CD4-positive, alpha-beta T cell (primary cell): ENCODE measurements at regions of chr13 and their contacts with region 1.

Region 1: DNA sequence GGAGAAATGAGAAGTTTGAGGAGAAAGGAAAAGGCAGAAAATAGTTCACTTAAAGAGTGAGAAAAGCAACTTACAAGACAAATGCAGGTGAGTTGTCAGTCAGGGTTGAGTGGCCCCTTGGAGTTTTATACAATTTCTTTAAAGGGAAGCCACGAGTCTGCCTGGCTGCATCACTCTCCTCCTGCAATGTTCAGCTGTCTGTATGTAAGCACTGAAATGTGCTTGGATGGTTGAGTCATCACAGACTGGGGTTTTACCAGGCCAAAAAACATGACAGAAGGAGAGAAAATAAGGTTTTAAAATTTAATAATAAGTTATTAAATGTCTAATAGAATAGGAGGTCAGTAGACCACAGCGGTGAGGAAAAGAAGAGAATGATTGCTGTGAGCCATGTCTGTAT is 51.0 kb upstream of the FGF14 start:
- DNase-seq: no peak
- ATAC-seq: no peak
- H3K4me3 ChIP-seq: no peak overlapping the region
- H3K4me3 Mint-ChIP-seq: no peak overlapping the region
- H3K27ac ChIP-seq: no peak overlapping the region
- H3K27ac Mint-ChIP-seq: no peak overlapping the region
- H3K4me1 ChIP-seq: peaks cover 4% of the 10 kb centered on the region
- H3K4me1 Mint-ChIP-seq: no peaks in the 10 kb centered on the region
- H3K27me3 ChIP-seq: no peaks in the 10 kb centered on the region
- H3K27me3 Mint-ChIP-seq: peaks cover 21% of the 10 kb centered on the region
- CTCF ChIP-seq: no peak

Region 2: GRCh38 chr13:101942038-101942437 is 510.8 kb before region 1 on chr13:
- CTCF ChIA-PET with region 1: no interaction called
- POLR2A ChIA-PET with region 1: no interaction called
- intact Hi-C with region 1: loop called in 1 of 2 experiments (anchors 10 kb)
- DNase-seq: peak in 1 of 14 experiments; percentile 2
- ATAC-seq: no peak
- H3K4me3 ChIP-seq: no peak overlapping the region
- H3K4me3 Mint-ChIP-seq: no peak overlapping the region
- H3K27ac ChIP-seq: no peak overlapping the region
- H3K27ac Mint-ChIP-seq: no peak overlapping the region
- H3K4me1 ChIP-seq: no peaks in the 10 kb centered on the region
- H3K4me1 Mint-ChIP-seq: no peaks in the 10 kb centered on the region
- H3K27me3 ChIP-seq: no peaks in the 10 kb centered on the region
- H3K27me3 Mint-ChIP-seq: peaks cover 3% of the 10 kb centered on the region
- CTCF ChIP-seq: no peak

Region 3: GRCh38 chr13:102569488-102569887 is 116.7 kb after region 1 on chr13:
- CTCF ChIA-PET with region 1: no interaction called
- POLR2A ChIA-PET with region 1: no interaction called
- intact Hi-C with region 1: no loop called
- DNase-seq: no peak
- ATAC-seq: no peak
- H3K4me3 ChIP-seq: no peak overlapping the region
- H3K4me3 Mint-ChIP-seq: no peak overlapping the region
- H3K27ac ChIP-seq: no peak overlapping the region
- H3K27ac Mint-ChIP-seq: no peak overlapping the region
- H3K4me1 ChIP-seq: no peaks in the 10 kb centered on the region
- H3K4me1 Mint-ChIP-seq: no peaks in the 10 kb centered on the region
- H3K27me3 ChIP-seq: peaks cover 5 to 20% of the 10 kb centered on the region in 2 experiments
- H3K27me3 Mint-ChIP-seq: peaks cover 36% of the 10 kb centered on the region
- CTCF ChIP-seq: no peak